Colonic mucosa (tissue), 4 donors: ENCODE measurements at regions of chr5 and their contacts with region 1.

Region 1: GRCh38 chr5:76256116-76256889 is 146.8 kb upstream of the IQGAP2 start:
- DNase-seq: peak; percentile 69
- H3K4me3 ChIP-seq: no peak overlapping the region
- H3K27ac ChIP-seq: no peak overlapping the region
- H3K4me1 ChIP-seq: no peaks in the 10 kb centered on the region
- H3K27me3 ChIP-seq: no peaks in the 10 kb centered on the region
- CTCF ChIP-seq: peak; percentile 56

Region 2: DNA sequence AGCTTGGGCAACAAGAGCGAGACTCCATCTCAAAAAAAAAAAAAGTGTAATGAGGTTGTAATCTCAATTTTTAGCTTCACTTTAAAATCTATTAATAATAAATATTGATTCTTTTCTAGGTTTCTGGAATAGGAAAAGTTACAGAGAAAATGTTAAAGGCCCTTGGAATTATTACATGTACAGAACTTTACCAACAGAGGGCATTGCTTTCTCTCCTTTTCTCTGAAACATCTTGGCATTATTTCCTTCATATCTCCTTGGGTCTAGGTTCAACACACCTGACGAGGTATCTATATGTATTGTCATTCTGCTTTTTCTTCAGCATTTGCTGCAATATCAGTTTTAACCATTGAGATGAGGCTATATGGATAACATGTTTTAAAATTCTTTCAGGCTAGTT is 671.7 kb before region 1 on chr5:
- intact Hi-C with region 1: loop called (anchors 5 kb)
- DNase-seq: no peak
- H3K4me3 ChIP-seq: no peak overlapping the region
- H3K27ac ChIP-seq: no peak overlapping the region
- H3K4me1 ChIP-seq: no peaks in the 10 kb centered on the region
- H3K27me3 ChIP-seq: no peaks in the 10 kb centered on the region
- CTCF ChIP-seq: no peak

Region 3: GRCh38 chr5:75734913-75735789 is 521.2 kb before region 1 on chr5:
- intact Hi-C with region 1: loop called (anchors 10 kb)
- DNase-seq: peak; percentile 47
- H3K4me3 ChIP-seq: no peak overlapping the region
- H3K27ac ChIP-seq: no peak overlapping the region
- H3K4me1 ChIP-seq: no peaks in the 10 kb centered on the region
- H3K27me3 ChIP-seq: no peaks in the 10 kb centered on the region
- CTCF ChIP-seq: peak; percentile 33

Region 4: DNA sequence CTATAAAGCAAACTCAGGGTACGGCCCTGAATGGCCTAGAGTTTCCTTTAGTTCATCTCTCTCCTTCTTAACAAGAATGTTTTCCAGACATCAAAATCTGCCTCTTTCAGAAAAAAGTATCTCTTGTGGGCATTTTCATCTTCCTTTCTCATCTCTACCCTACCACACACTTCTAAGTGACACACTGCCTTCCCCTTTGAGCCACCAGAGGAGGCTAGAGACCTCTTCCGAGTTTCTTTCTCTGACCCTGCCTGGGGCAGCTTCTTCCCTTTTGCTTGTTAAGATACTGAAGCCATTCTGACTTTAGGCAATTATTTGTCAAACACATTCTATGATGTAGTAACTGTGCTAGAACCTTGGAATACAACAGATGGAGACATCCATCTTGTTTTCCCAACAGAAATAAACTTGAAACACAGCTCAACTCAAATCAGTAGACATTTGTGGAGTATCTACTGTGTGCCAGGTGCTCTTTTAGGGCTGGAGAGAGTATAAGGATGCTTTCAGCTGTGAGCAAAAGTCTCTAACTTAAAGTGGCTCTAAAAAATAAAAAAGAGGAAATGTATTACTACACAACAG is 181.7 kb before region 1 on chr5:
- intact Hi-C with region 1: loop called (anchors 10 kb)
- DNase-seq: peak; percentile 36
- H3K4me3 ChIP-seq: no peak overlapping the region
- H3K27ac ChIP-seq: no peak overlapping the region
- H3K4me1 ChIP-seq: no peaks in the 10 kb centered on the region
- H3K27me3 ChIP-seq: no peaks in the 10 kb centered on the region
- CTCF ChIP-seq: peak; percentile 80

Region 5: DNA sequence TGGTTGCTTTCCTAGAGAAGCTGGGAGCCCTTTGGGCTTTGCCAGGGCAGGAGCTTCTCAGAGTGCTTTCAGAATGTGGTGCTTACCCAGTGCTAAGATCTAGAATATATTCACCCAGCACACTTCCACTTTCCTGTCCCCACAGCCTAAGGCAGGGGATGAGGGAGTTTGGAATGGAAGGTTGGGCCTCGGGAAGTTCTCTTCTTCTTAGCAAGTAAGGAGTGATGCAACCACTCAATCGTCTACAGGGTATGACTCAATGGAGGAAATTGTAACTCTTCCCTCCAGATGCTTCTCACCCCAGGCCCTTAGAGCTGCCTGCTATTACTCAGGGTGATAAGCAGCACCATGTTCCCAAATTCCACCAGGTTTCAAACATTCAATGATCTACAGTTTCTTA is 743.1 kb after region 1 on chr5:
- intact Hi-C with region 1: no loop called
- DNase-seq: no peak
- H3K4me3 ChIP-seq: no peak overlapping the region
- H3K27ac ChIP-seq: no peak overlapping the region
- H3K4me1 ChIP-seq: no peaks in the 10 kb centered on the region
- H3K27me3 ChIP-seq: no peaks in the 10 kb centered on the region
- CTCF ChIP-seq: no peak